Sigmoid colon (tissue), 7 donors: ENCODE measurements at regions of chr15 and their contacts with region 1.

Region 1: GRCh38 chr15:41022487-41023090 is 69.3 kb downstream of the CHAC1 start:
- DNase-seq: no peak
- H3K4me3 ChIP-seq: no peak overlapping the region
- H3K27ac ChIP-seq: peak overlapping the region in 2 of 4 donors; percentile 9 to 75
- H3K4me1 ChIP-seq: peaks cover 0 to 38% (median 30%) of the 10 kb centered on the region in 4 donors
- H3K27me3 ChIP-seq: no peaks in the 10 kb centered on the region
- CTCF ChIP-seq: peak; percentile 51 to 71 (median 64)
- EP300 ChIP-seq: no peak
- POLR2A ChIP-seq: no peak

Region 2: GRCh38 chr15:40941528-40942336 is 80.9 kb before region 1 on chr15:
- intact Hi-C with region 1: loop called (anchors 2 kb)
- DNase-seq: peak; percentile 86
- H3K4me3 ChIP-seq: peak overlapping the region; percentile 40 to 65 (median 60)
- H3K27ac ChIP-seq: peak overlapping the region; percentile 74 to 87 (median 86)
- H3K4me1 ChIP-seq: peaks cover 0 to 24% (median 16%) of the 10 kb centered on the region in 4 donors
- H3K27me3 ChIP-seq: no peaks in the 10 kb centered on the region
- CTCF ChIP-seq: peak in 2 of 4 experiments; percentile 35 to 52
- EP300 ChIP-seq: no peak
- POLR2A ChIP-seq: no peak

Region 3: DNA sequence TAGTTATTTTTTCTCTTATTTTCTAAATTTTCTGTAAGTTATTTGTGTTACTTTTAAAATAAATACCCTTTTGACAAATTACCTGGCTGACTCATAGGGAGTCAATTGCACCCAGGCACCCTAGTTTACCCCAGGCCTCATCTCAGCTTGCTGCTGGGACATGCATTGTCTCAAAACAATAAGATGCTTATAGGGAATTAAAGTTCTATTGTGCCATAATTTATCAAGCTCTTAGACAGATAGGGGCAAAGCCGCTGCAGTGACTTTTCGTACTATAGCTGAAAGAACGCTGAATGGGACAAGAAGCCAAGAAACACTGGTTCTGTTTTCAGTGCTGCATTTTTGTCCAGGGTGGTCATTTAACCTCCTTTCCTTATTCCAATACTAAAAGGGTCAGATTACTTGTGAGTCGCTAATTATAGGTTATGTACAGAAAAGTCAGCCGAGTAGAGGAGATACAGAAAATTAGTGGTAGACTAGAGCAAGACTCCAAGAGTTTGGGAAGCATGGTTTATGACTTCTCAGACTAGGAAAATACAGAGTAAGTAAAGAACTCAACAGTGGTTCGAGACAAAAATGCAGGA is 157.7 kb after region 1 on chr15:
- intact Hi-C with region 1: loop called (anchors 10 kb)
- DNase-seq: no peak
- H3K4me3 ChIP-seq: no peak overlapping the region
- H3K27ac ChIP-seq: no peak overlapping the region
- H3K4me1 ChIP-seq: no peaks in the 10 kb centered on the region
- H3K27me3 ChIP-seq: no peaks in the 10 kb centered on the region
- CTCF ChIP-seq: no peak
- EP300 ChIP-seq: no peak
- POLR2A ChIP-seq: no peak

Region 4: GRCh38 chr15:41258706-41259471 is 236.3 kb after region 1 on chr15:
- intact Hi-C with region 1: no loop called
- DNase-seq: no peak
- H3K4me3 ChIP-seq: no peak overlapping the region
- H3K27ac ChIP-seq: no peak overlapping the region
- H3K4me1 ChIP-seq: no peaks in the 10 kb centered on the region
- H3K27me3 ChIP-seq: no peaks in the 10 kb centered on the region
- CTCF ChIP-seq: no peak
- EP300 ChIP-seq: no peak
- POLR2A ChIP-seq: no peak